Right lobe of liver (tissue), 6 donors: ENCODE measurements at regions of chr22 and their contacts with region 1.

Region 1: DNA sequence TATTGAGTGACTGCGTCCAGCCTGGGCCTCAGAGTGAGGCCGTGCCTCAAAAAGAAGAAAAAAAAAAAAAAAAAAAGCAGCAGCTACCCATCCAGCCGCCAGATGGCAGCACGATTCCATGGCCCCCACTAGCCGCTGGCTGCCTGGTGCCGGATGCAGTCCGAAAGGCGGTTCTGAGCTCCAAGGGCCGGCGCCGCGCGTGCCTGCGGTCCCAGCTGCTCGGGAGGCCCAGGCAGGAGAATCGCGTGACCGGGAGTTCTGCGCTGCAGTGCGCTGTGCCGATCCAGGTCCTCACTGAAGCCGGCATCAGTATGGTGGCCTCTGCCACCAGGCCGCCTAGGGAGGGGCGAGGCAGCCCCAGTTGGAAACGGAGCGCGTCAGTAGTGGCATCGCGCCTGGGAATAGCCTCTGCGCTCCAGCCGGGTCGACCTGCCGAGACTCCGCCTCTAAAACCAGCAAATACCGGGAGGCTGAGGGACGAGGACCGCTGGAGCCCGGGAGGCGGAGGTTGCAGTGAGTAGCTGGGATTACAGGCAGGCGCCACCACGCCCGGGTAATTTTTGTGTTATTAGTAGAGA is 19.3 kb downstream of the SCARF2 start:
- DNase-seq: peak; percentile 81 to 85 (median 83)
- ATAC-seq: peak; percentile 87 to 93 (median 90)
- H3K4me3 ChIP-seq: peak overlapping the region; percentile 10 to 23 (median 20)
- H3K27ac ChIP-seq: no peak overlapping the region
- H3K4me1 ChIP-seq: peaks cover 0 to 12% (median 0%) of the 10 kb centered on the region in 4 donors
- H3K27me3 ChIP-seq: no peaks in the 10 kb centered on the region
- CTCF ChIP-seq: peak; percentile 74 to 93 (median 86)
- POLR2A ChIP-seq: no peak

Region 2: GRCh38 chr22:20456064-20456721 is 37.9 kb after region 1 on chr22:
- intact Hi-C with region 1: loop called (anchors 5 kb)
- DNase-seq: peak; percentile 70 to 80 (median 74)
- ATAC-seq: peak; percentile 88 to 96 (median 93)
- H3K4me3 ChIP-seq: no peak overlapping the region
- H3K27ac ChIP-seq: no peak overlapping the region
- H3K4me1 ChIP-seq: no peaks in the 10 kb centered on the region
- H3K27me3 ChIP-seq: no peaks in the 10 kb centered on the region
- CTCF ChIP-seq: peak; percentile 84 to 90 (median 88)
- POLR2A ChIP-seq: no peak

Region 3: DNA sequence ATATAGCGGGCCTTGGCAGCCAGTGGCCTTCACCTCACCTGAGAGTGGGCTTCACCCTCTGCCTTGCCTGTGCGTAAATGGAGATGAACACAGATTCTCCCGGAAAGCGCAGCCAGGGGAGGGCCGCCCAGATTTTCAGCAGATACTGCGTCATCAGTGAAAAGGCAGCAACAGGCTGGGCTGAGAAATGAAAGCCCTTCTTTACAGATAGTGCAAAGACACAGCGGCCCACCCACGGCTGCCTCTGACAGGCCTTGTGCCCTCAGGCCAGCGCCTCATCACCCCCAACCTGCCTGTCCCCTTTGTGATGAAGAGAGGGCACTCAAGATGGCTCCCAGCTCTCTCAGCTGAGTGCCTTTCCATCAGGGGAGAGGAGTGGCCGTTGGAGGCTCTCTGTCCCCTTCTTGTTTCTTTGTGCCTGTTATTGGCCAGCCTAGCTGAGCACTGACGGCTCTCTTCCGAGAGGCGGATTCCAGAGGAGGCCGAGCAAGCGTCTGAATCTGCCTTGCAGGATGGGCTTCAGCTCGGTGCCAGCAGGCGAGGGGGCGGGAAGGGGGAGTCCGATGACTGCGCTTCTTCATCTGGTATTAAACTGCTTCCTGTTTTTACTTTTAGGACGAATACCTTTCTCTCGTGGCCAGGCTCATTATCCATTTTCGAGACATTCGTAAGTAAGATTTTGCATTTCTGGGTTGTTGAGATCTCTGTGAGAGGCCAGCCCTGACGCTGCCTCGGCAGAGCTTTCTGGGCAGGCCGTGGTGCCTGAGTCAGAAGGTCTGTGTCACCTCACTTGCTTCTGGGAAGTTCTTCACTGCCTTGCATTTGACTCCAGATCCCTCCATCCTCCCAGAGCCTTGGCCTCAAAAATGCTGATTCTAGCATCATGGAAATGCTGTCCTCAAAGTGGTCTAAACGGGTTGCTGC is 132.8 kb after region 1 on chr22:
- intact Hi-C with region 1: no loop called
- DNase-seq: no peak
- ATAC-seq: peak; percentile 20 to 38 (median 30)
- H3K4me3 ChIP-seq: no peak overlapping the region
- H3K27ac ChIP-seq: peak overlapping the region; percentile 64 to 72 (median 69)
- H3K4me1 ChIP-seq: peaks cover 0 to 36% (median 13%) of the 10 kb centered on the region in 4 donors
- H3K27me3 ChIP-seq: no peaks in the 10 kb centered on the region
- CTCF ChIP-seq: no peak
- POLR2A ChIP-seq: no peak

Region 4: GRCh38 chr22:20656902-20657836 is 238.9 kb after region 1 on chr22:
- intact Hi-C with region 1: no loop called
- DNase-seq: no peak
- ATAC-seq: no peak
- H3K4me3 ChIP-seq: no peak overlapping the region
- H3K27ac ChIP-seq: no peak overlapping the region
- H3K4me1 ChIP-seq: no peaks in the 10 kb centered on the region
- H3K27me3 ChIP-seq: no peaks in the 10 kb centered on the region
- CTCF ChIP-seq: no peak
- POLR2A ChIP-seq: no peak